Activated B cell treated with CpG ODN at 0.5 μM for 24 hours (primary cell): ENCODE measurements at regions of chr20 and their contacts with region 1.

Region 1: DNA sequence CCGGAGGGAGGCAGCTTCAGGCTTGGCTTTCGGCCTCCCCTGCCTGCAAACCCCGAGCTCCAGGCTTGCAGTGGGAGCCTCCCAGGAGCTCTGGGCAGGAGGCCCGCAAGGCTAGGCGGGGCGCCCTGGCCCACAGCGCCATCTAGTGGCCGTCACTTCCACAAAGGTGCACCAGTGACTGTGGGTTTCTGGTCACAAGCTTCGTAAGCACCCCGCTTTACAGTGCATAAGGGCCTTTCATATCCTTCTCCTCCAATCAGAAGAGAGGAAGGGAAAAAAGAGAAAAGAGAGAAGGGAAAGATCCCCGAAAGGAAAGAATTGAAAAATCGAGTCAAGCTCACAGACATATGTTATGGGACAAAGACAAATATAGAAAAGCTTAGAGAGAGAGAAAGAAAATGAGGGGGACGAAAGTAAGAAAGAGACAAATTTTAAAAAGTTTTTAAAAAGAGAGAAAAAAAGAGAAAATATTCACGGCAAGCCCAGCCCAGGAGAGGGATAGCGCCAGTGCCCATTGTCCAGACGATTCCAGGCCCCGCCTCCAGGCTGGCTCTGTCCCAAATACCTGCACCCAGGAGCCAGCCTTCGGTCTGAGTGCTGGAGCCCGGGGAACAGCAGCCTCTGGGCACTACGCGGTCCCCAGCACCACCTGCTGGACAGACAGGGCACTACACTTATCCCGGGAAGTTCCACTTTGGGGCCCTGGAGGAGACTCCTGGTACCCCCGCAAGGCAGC is 207.1 kb downstream of the PREX1 start:
- DNase-seq: peak; percentile 70
- ATAC-seq: peak; percentile 95
- H3K4me3 Mint-ChIP-seq: peak overlapping the region; percentile 50
- H3K27ac Mint-ChIP-seq: no peak overlapping the region
- H3K4me1 Mint-ChIP-seq: peaks cover 10% of the 10 kb centered on the region
- H3K27me3 Mint-ChIP-seq: no peaks in the 10 kb centered on the region
- CTCF ChIP-seq: peak; percentile 51

Region 2: GRCh38 chr20:47196091-47197081 is 1424.3 kb before region 1 on chr20:
- CTCF ChIA-PET with region 1: interaction called, 10 read pairs
- POLR2A ChIA-PET with region 1: no interaction called
- intact Hi-C with region 1: loop called (anchors 1 kb)
- DNase-seq: peak; percentile 74
- ATAC-seq: peak; percentile 95
- H3K4me3 Mint-ChIP-seq: no peak overlapping the region
- H3K27ac Mint-ChIP-seq: no peak overlapping the region
- H3K4me1 Mint-ChIP-seq: peaks cover 7% of the 10 kb centered on the region
- H3K27me3 Mint-ChIP-seq: peaks cover 3% of the 10 kb centered on the region
- CTCF ChIP-seq: peak; percentile 95

Region 3: DNA sequence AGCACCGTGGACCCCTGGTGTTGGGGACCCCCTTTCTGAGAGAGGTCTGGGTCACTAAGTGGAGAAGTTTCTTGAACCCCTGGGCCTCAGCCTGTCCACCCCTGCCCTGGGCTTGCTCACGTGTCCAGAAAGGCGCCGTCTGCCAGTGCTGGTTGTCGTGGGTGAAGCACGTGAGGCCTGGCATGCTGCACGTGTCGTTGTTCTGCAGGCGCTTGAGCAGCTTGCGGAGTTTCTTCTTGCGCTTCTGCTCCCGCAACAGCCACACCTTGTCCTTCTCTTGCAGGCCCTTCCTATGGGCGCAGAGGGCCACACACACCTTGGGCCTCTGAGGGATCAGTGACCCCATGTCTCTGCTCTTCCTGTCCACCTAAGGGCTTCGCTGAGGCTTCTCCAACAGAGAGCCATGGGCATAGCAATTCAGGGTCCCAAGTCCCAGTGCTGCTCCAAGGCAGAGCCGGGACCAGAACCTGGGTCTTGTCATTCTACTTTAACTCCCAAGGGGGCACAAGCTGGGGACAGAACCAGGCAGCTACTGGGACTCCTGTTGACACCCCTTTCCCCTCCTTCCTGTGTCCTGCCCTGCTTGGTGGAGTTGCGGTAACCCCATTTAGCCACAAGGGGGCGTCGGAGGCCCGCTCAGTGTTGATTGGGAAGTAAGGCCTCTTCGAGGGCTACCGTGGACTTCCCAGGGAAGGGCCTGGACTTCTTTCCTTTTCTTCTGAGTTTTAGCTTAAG is 957.2 kb before region 1 on chr20:
- CTCF ChIA-PET with region 1: interaction called, 28 read pairs
- POLR2A ChIA-PET with region 1: no interaction called
- intact Hi-C with region 1: loop called (anchors 1 kb)
- DNase-seq: peak; percentile 69
- ATAC-seq: peak; percentile 88
- H3K4me3 Mint-ChIP-seq: no peak overlapping the region
- H3K27ac Mint-ChIP-seq: no peak overlapping the region
- H3K4me1 Mint-ChIP-seq: peaks cover 4% of the 10 kb centered on the region
- H3K27me3 Mint-ChIP-seq: no peaks in the 10 kb centered on the region
- CTCF ChIP-seq: peak; percentile 75

Region 4: GRCh38 chr20:47677635-47678453 is 942.8 kb before region 1 on chr20:
- CTCF ChIA-PET with region 1: interaction called, 147 read pairs
- POLR2A ChIA-PET with region 1: no interaction called
- intact Hi-C with region 1: loop called (anchors 1 kb)
- DNase-seq: peak; percentile 61
- ATAC-seq: peak; percentile 71
- H3K4me3 Mint-ChIP-seq: no peak overlapping the region
- H3K27ac Mint-ChIP-seq: no peak overlapping the region
- H3K4me1 Mint-ChIP-seq: no peaks in the 10 kb centered on the region
- H3K27me3 Mint-ChIP-seq: no peaks in the 10 kb centered on the region
- CTCF ChIP-seq: no peak

Region 5: GRCh38 chr20:47785854-47786764 is 834.6 kb before region 1 on chr20:
- CTCF ChIA-PET with region 1: interaction called, 42 read pairs
- POLR2A ChIA-PET with region 1: no interaction called
- intact Hi-C with region 1: loop called (anchors 1 kb)
- DNase-seq: peak; percentile 38
- ATAC-seq: peak; percentile 49
- H3K4me3 Mint-ChIP-seq: peak overlapping the region; percentile 86
- H3K27ac Mint-ChIP-seq: no peak overlapping the region
- H3K4me1 Mint-ChIP-seq: peaks cover 18% of the 10 kb centered on the region
- H3K27me3 Mint-ChIP-seq: peaks cover 40% of the 10 kb centered on the region
- CTCF ChIP-seq: no peak

Region 6: GRCh38 chr20:47854163-47854562 is 766.5 kb before region 1 on chr20:
- CTCF ChIA-PET with region 1: interaction called, 8 read pairs
- POLR2A ChIA-PET with region 1: no interaction called
- intact Hi-C with region 1: loop called (anchors 2 kb)
- DNase-seq: no peak
- ATAC-seq: no peak
- H3K4me3 Mint-ChIP-seq: no peak overlapping the region
- H3K27ac Mint-ChIP-seq: no peak overlapping the region
- H3K4me1 Mint-ChIP-seq: peaks cover 13% of the 10 kb centered on the region
- H3K27me3 Mint-ChIP-seq: peaks cover 8% of the 10 kb centered on the region
- CTCF ChIP-seq: no peak

Region 7: GRCh38 chr20:48350313-48351008 is 270.2 kb before region 1 on chr20:
- CTCF ChIA-PET with region 1: interaction called, 3 read pairs
- POLR2A ChIA-PET with region 1: no interaction called
- intact Hi-C with region 1: loop called (anchors 2 kb)
- DNase-seq: no peak
- ATAC-seq: peak; percentile 31
- H3K4me3 Mint-ChIP-seq: no peak overlapping the region
- H3K27ac Mint-ChIP-seq: no peak overlapping the region
- H3K4me1 Mint-ChIP-seq: no peaks in the 10 kb centered on the region
- H3K27me3 Mint-ChIP-seq: peaks cover 10% of the 10 kb centered on the region
- CTCF ChIP-seq: no peak

Region 8: DNA sequence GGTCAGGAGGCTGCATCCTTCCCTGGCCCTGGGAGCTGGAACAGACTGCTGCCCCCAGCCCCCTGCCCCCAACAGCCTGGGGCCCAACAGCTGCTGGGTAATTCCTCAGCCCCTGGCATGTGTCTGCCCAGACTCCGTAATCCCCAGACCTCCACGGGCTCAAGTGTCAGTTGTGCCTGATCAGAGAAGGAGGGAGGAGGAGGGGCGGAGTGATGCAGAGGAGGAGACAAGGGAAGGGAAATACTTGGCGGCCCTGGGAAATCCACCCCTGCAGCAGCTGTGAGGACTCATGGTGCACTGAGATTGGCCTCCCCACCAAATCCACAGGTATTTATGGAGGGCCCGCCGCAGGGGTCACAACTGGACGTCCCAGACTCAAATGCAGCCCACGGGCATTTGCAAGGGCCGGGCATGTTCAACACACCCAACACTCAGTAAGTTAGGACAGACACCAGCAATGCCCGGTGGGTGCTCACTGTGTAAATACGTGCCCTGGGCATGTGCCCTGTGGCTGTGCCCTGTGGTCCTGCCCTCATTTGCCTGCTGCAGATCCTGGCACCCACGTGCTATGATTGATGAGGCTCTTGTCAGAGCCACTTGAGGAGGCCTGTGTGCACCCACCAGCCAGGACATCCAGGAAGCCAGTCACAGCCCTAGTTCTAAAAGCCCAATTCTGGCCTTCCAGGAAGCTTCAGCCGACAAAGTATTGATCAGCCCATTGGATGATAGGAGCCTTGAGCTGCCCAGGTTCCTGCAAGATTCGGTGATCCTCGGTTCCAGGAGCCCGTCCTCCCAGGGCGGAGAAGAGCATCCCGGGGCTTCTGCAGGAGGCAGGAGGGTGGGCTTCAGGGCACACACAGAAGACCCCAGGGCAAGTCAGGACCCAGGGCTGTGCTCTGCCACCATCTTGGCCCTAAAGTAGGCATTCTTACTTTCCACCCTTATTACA is 17.0 kb before region 1 on chr20:
- CTCF ChIA-PET with region 1: no interaction called
- POLR2A ChIA-PET with region 1: no interaction called
- intact Hi-C with region 1: no loop called
- DNase-seq: no peak
- ATAC-seq: no peak
- H3K4me3 Mint-ChIP-seq: no peak overlapping the region
- H3K27ac Mint-ChIP-seq: no peak overlapping the region
- H3K4me1 Mint-ChIP-seq: peaks cover 2% of the 10 kb centered on the region
- H3K27me3 Mint-ChIP-seq: peaks cover 9% of the 10 kb centered on the region
- CTCF ChIP-seq: no peak